K562 (cell line): ENCODE measurements at regions of chr21 and their contacts with region 1.

Region 1: DNA sequence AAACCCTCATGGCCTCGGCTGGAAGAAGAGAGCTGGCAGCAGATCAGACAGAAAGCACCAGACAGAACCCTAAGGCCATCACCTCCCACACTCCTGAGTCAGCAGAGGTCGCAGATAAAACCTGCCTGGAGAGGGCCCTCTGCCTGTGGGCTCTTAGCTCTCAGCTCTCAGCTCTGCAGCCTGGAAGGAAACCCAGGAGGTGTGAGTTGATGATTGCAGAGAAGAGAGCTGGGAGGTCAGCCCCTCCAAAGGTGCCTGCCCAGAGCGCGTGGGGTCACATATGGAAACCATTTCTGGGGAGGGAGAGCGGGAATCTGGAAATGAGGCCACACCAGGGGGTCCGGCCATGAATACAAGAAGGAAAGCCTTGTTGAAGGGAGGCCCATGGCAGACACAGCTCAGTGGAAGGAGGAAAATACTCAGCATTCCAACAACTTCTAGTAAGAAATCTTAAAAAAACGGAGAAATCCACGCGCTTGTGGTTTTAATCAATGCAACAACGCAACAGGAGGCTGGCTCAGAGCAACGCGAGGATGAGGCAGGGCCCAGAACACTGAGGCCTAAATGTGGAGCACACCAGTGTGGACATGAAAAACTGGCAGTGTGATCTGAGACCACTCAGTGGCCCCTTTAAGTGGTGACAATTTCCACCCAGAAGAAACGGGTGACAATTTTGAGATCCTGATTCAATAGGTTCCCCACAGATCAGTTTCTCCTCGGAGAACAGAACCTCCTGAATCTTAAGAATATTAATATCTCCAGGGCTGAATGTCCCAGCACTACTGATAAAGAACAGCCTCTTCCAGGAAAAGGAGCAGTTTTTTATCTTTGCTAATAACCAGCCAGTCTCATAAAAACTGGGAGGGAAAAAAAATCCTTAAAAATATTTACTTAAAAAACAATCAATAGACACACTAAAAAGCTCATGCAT is 45.7 kb downstream of the PSMG1 start:
- DNase-seq: peak in 3 of 4 experiments; percentile 32 to 72 (median 71)
- ATAC-seq: peak; percentile 85
- H3K4me3 ChIP-seq: no peak overlapping the region
- H3K27ac ChIP-seq: no peak overlapping the region
- H3K4me1 ChIP-seq: peaks cover 0 to 6% of the 10 kb centered on the region in 2 experiments; a peak in 3 of 5 replicates
- H3K27me3 ChIP-seq: peaks cover 14 to 29% of the 10 kb centered on the region in 2 experiments; a peak in 4 of 5 replicates
- CTCF ChIP-seq: peak; percentile 34 to 47 (median 39); a peak in 4 of 6 replicates
- EP300 ChIP-seq: peak; percentile 14; the same call in 1 of the 2 replicates
- POLR2A ChIP-seq: no peak
- RAD21 ChIP-seq: peak; percentile 24 to 42; a peak in 3 of 4 replicates

Region 2: GRCh38 chr21:38505654-38506515 is 631.6 kb before region 1 on chr21:
- CTCF ChIA-PET with region 1: no interaction called
- POLR2A ChIA-PET with region 1: no interaction called
- in situ Hi-C with region 1: no loop called
- intact Hi-C with region 1: loop called (anchors 2 kb)
- DNase-seq: peak in 3 of 4 experiments; percentile 20 to 60 (median 31)
- ATAC-seq: peak; percentile 95
- H3K4me3 ChIP-seq: no peak overlapping the region
- H3K27ac ChIP-seq: no peak overlapping the region
- H3K4me1 ChIP-seq: no peaks in the 10 kb centered on the region
- H3K27me3 ChIP-seq: peaks cover 17 to 24% of the 10 kb centered on the region in 2 experiments
- CTCF ChIP-seq: peak; percentile 57 to 75 (median 66)
- EP300 ChIP-seq: no peak
- POLR2A ChIP-seq: no peak
- RAD21 ChIP-seq: peak; percentile 59 to 77

Region 3: DNA sequence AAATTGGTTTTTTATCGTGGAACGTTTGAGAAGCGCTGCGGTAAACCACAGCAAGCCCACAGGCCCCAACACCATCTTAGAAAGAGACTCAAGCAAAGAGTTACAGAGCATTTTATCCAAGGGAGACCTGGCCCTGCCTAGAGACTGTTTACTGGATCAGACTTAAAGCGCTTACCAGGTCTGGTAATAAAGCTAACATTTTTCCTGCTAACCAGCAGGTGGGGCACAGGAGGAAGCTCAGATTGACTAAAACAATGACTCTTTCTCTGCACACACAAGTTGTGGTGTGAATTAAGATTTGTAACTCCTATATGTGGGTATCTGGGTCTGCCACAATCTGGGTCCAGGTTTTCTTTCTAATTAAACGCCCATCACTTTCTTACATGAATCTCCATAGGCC is 468.3 kb before region 1 on chr21:
- CTCF ChIA-PET with region 1: interaction called, 4 read pairs
- POLR2A ChIA-PET with region 1: no interaction called
- in situ Hi-C with region 1: no loop called
- intact Hi-C with region 1: loop called (anchors 5 kb)
- DNase-seq: peak; percentile 22 to 27 (median 24)
- ATAC-seq: peak; percentile 86
- H3K4me3 ChIP-seq: no peak overlapping the region
- H3K27ac ChIP-seq: no peak overlapping the region
- H3K4me1 ChIP-seq: no peaks in the 10 kb centered on the region
- H3K27me3 ChIP-seq: peaks cover 14 to 37% of the 10 kb centered on the region in 2 experiments
- CTCF ChIP-seq: peak; percentile 40 to 60 (median 59)
- EP300 ChIP-seq: no peak
- POLR2A ChIP-seq: no peak
- RAD21 ChIP-seq: peak; percentile 33 to 61

Region 4: DNA sequence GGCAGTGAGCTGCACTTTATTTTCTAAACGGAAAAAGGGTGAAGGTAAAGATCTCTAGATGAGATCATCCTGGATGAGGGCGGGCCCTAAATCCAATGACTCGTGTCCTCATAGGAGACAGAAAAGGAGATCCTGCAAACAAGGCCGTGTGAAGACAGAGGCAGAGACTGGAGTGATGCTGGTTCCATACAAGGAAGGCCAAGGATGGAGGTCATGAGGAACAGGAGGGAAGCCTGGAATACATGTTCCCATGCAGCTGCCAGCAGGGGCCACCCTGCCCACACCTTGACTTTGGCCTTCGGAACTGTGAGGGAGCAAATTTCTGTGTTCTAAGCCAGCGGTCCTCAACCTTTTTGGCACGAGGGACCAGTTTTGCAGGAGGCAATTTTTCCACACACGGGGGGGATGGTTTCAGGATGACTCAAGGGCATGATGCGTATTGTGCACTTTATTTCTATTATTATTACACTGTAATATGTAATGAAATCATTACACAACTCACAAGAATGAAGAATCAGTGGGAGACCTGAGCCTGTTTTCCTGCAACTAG is 48.6 kb before region 1 on chr21:
- CTCF ChIA-PET with region 1: interaction called, 5 read pairs
- POLR2A ChIA-PET with region 1: no interaction called
- in situ Hi-C with region 1: no loop called
- intact Hi-C with region 1: loop called (anchors 1 kb)
- DNase-seq: peak; percentile 29 to 43 (median 38)
- ATAC-seq: peak; percentile 69
- H3K4me3 ChIP-seq: no peak overlapping the region
- H3K27ac ChIP-seq: no peak overlapping the region
- H3K4me1 ChIP-seq: peaks cover 0 to 6% of the 10 kb centered on the region in 2 experiments; a peak in 2 of 5 replicates
- H3K27me3 ChIP-seq: peaks cover 65 to 89% of the 10 kb centered on the region in 2 experiments
- CTCF ChIP-seq: peak; percentile 44 to 72 (median 68)
- EP300 ChIP-seq: no peak
- POLR2A ChIP-seq: no peak
- RAD21 ChIP-seq: peak; percentile 25 to 73